GM10248 (cell line): ENCODE measurements at regions of chr7 and their contacts with region 1.

Region 1: GRCh38 chr7:25093268-25093826 is 31.7 kb downstream of the CYCS start:
- DNase-seq: peak; percentile 82
- CTCF ChIP-seq: peak; percentile 84

Region 2: DNA sequence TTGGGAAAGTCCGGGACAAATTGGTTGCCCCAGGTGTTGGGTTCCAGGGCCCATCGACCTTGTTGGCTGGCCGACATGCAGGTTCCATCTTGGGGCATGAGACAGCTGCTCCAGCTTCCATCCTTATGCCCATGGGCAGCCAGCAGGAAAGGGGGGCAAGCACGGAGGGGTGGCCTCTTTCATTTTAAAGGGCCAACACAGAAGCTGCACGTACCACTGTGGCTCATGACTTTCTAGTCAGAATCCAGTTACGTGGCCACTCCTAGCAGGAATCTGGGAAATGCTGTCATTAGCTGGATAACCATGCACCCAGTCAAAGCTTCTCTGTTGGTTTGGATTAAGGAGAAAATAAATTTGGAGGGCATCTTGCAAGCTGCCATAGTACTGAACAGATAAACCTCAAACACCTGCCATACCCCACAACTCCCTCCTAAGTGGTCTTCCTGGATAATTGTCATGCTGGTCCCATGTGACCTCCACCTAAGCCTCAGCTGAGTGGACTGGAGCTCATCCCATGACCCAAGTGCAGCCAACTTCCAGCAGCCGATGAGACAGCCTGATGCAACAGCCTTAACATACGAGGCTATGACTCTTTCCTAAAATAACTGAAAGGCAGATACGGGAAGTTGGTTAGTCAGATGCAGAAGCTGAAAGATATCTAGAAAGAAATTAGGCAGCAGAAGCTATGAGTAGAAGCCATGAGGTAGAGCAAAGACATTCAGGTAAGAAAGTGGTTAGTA is 314.6 kb before region 1 on chr7:
- CTCF ChIA-PET with region 1: interaction called, 11 read pairs
- POLR2A ChIA-PET with region 1: no interaction called
- DNase-seq: peak; percentile 42
- CTCF ChIP-seq: no peak

Region 3: GRCh38 chr7:24825931-24826661 is 267.3 kb before region 1 on chr7:
- CTCF ChIA-PET with region 1: interaction called, 96 read pairs
- POLR2A ChIA-PET with region 1: no interaction called
- DNase-seq: no peak
- CTCF ChIP-seq: no peak

Region 4: GRCh38 chr7:24979863-24980533 is 113.3 kb before region 1 on chr7 and contains the start of gene OSBPL3:
- CTCF ChIA-PET with region 1: interaction called, 60 read pairs
- POLR2A ChIA-PET with region 1: interaction called, 3 read pairs
- DNase-seq: peak; percentile 94
- CTCF ChIP-seq: peak; percentile 46

Region 5: GRCh38 chr7:25117226-25118047 is 24.1 kb after region 1 on chr7:
- CTCF ChIA-PET with region 1: interaction called, 57 read pairs
- POLR2A ChIA-PET with region 1: no interaction called
- DNase-seq: peak; percentile 70
- CTCF ChIP-seq: no peak

Region 6: DNA sequence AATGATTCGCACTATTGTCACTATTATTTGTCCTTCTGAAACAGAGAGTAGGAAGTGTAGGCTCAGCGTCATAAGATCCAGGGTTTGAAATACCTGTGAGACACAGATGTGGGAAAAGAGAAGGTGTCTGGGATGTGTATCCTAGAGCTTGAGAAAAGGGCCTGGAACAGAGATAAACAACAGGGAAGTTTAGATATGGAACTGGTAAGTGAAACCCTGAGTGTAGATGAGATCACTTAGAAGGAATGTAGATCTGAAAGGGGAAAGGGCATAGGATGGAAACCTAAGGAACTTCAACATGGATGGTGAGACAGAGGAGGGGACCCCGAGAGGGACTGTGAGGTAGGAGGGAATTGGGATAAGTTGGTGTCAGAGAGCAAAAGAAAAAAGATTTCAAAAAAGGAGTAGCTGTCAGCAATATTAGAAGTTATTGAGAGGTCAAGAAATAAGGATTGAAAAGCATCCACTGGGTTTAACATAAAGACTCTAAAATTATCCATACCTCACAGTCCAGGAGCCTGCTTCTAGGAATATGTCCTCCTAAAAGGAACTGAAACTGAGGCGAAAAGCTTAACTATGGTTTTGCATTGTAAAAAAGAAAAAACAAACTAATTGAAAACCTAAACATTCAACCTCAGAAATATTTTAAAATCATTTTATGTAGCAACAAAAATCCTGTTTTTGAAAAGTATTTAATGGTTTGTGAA is 254.2 kb after region 1 on chr7:
- CTCF ChIA-PET with region 1: no interaction called
- POLR2A ChIA-PET with region 1: no interaction called
- DNase-seq: no peak
- CTCF ChIP-seq: no peak